MCF 10A (cell line): ENCODE measurements at regions of chr1 and their contacts with region 1.

Region 1: GRCh38 chr1:212455803-212456528 is 23.2 kb downstream of the NENF start:
- DNase-seq: peak; percentile 88
- H3K4me3 Mint-ChIP-seq: no peak overlapping the region
- H3K27ac Mint-ChIP-seq: no peak overlapping the region
- H3K4me1 Mint-ChIP-seq: no peaks in the 10 kb centered on the region
- H3K27me3 Mint-ChIP-seq: no peaks in the 10 kb centered on the region
- CTCF ChIP-seq: peak; percentile 100

Region 2: DNA sequence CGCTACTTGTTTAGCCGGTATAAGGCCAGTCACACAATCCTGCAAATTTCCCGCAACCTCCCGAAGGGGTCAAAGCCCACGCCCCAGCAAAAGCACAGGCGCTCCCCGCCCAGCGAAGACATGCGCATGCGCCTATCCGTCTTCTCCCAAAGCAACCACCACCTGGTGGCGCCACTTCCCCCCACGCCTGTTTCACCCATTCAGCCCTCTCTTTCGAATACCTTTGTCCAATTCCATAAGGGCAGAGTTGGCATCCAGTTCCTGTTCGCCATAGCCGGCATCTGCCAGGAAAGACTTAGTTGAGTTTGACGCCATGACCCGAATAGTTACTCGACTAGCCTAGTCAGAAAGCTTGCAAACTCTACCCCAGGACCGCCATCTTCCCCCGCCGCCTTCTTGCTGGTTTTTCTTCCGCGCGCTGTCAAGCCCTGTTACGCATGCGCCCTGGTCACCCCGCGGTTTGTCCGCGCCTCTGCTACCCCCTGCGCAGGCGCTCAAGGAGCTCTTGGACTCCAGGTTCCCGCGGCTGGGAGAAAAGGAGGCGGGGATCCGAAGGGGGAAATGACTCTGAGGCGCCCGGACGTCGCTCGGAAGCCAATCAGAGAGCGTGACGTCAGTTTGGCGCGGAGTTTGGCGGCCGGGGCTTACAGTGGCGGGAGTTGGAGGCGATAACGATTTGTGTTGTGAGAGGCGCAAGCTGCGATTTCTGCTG is 420.7 kb before region 1 on chr1 and contains the starts of genes DTL and INTS7:
- CTCF ChIA-PET with region 1: interaction called, 116 read pairs
- POLR2A ChIA-PET with region 1: interaction called, 13 read pairs
- intact Hi-C with region 1: loop called (anchors 1 kb)
- DNase-seq: peak; percentile 100
- H3K4me3 Mint-ChIP-seq: peak within 1 kb of the TSS; percentile 88
- H3K27ac Mint-ChIP-seq: peak within 1 kb of the TSS; percentile 89
- H3K4me1 Mint-ChIP-seq: peaks cover 65% of the 10 kb centered on the region
- H3K27me3 Mint-ChIP-seq: no peaks in the 10 kb centered on the region
- CTCF ChIP-seq: peak; percentile 99
- total RNA-seq, gene DTL: 20.2 and 34.4 TPM in 2 replicates
- total RNA-seq, gene INTS7: 50.0 and 62.3 TPM in 2 replicates

Region 3: GRCh38 chr1:212098310-212098709 is 357.7 kb before region 1 on chr1:
- CTCF ChIA-PET with region 1: interaction called, 10 read pairs
- POLR2A ChIA-PET with region 1: no interaction called
- intact Hi-C with region 1: no loop called
- DNase-seq: no peak
- H3K4me3 Mint-ChIP-seq: no peak overlapping the region
- H3K27ac Mint-ChIP-seq: peak overlapping the region; percentile 0
- H3K4me1 Mint-ChIP-seq: no peaks in the 10 kb centered on the region
- H3K27me3 Mint-ChIP-seq: no peaks in the 10 kb centered on the region
- CTCF ChIP-seq: no peak

Region 4: GRCh38 chr1:212375986-212376385 is 80.0 kb before region 1 on chr1:
- CTCF ChIA-PET with region 1: interaction called, 113 read pairs
- POLR2A ChIA-PET with region 1: no interaction called
- intact Hi-C with region 1: no loop called
- DNase-seq: no peak
- H3K4me3 Mint-ChIP-seq: no peak overlapping the region
- H3K27ac Mint-ChIP-seq: peak overlapping the region; percentile 6
- H3K4me1 Mint-ChIP-seq: no peaks in the 10 kb centered on the region
- H3K27me3 Mint-ChIP-seq: no peaks in the 10 kb centered on the region
- CTCF ChIP-seq: no peak

Region 5: GRCh38 chr1:212477014-212477679 is 21.2 kb after region 1 on chr1:
- CTCF ChIA-PET with region 1: interaction called, 250 read pairs
- POLR2A ChIA-PET with region 1: interaction called, 3 read pairs
- intact Hi-C with region 1: no loop called
- DNase-seq: peak; percentile 96
- H3K4me3 Mint-ChIP-seq: no peak overlapping the region
- H3K27ac Mint-ChIP-seq: peak overlapping the region; percentile 46
- H3K4me1 Mint-ChIP-seq: peaks cover 17% of the 10 kb centered on the region
- H3K27me3 Mint-ChIP-seq: no peaks in the 10 kb centered on the region
- CTCF ChIP-seq: peak; percentile 99

Region 6: DNA sequence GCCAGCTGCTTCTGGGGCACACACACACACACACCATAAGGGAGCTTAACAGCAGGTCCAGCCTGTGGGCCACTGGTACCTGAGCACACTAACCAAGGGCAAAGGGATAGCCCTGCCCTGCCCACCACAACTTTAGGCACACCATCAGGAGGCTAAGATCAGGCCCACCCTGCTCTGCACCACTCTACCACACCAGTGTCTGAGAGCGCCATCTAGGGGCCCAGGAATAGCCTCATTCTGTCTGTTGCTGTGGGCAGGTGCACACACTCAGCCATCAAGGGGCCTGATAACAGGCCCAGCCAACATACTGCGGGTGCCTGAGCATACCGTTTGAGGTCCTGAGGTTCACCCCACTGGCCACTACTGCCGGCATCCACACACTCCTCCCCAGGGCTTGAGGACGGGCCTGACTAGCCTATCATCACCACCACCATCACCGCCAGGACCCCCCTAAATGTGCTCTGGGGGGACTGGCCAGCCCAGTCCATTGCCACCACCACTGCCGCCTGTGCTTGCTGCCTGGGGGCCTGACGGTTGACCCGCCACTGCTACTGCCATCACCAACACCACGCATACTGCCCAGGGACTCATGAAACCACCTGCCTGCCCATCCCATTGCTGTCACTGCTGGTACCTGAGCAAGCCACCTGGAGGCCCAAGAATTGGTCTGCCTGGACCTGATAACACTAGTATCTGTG is 304.3 kb after region 1 on chr1:
- CTCF ChIA-PET with region 1: interaction called, 19 read pairs
- POLR2A ChIA-PET with region 1: no interaction called
- intact Hi-C with region 1: no loop called
- DNase-seq: peak; percentile 57
- H3K4me3 Mint-ChIP-seq: no peak overlapping the region
- H3K27ac Mint-ChIP-seq: no peak overlapping the region
- H3K4me1 Mint-ChIP-seq: no peaks in the 10 kb centered on the region
- H3K27me3 Mint-ChIP-seq: no peaks in the 10 kb centered on the region
- CTCF ChIP-seq: peak; percentile 82